Heart right ventricle (tissue), 16 donors: ENCODE measurements at regions of chr10 and their contacts with region 1.

Region 1: GRCh38 chr10:103685880-103686669 is 169.3 kb downstream of the SH3PXD2A start:
- DNase-seq: peak; percentile 69 to 78
- ATAC-seq: peak; percentile 69 to 87 (median 82)
- H3K4me3 ChIP-seq: no peak overlapping the region
- H3K27ac ChIP-seq: no peak overlapping the region
- H3K4me1 ChIP-seq: peaks cover 0 to 20% (median 5%) of the 10 kb centered on the region in 9 donors
- H3K27me3 ChIP-seq: no peaks in the 10 kb centered on the region
- CTCF ChIP-seq: peak; percentile 95 to 99 (median 96)

Region 2: DNA sequence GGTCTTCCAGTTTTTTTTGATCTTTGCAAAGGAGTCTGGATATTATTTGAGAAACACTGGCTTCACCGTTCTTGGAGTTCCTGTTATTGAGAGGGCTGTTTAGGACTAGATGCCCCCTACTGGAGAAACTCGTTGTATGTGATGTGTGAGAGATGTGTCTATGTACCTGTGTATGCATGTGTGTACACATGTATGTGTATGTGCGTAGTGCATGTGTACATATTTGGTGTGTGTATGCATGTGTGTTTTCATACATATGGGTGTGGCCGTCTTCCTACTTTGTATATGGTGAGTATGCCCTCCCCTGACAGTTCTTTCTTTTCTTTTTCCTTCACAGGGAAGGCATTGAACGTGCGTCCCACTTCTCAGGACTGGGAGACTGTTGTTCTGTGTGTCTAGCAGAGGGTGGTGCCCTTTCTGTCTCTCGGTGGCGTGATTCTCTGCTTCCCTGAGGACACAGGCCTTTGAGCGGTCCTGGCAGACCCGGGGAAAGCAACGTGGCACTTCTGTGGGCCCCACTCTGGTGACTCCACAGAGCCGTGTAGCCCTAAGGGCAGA is 204.0 kb before region 1 on chr10:
- intact Hi-C with region 1: no loop called
- DNase-seq: peak in 1 of 2 donors; percentile 61
- ATAC-seq: peak in 6 of 8 donors; percentile 46 to 70 (median 60)
- H3K4me3 ChIP-seq: no peak overlapping the region
- H3K27ac ChIP-seq: no peak overlapping the region
- H3K4me1 ChIP-seq: peaks cover 0 to 17% (median 3%) of the 10 kb centered on the region in 9 donors
- H3K27me3 ChIP-seq: no peaks in the 10 kb centered on the region
- CTCF ChIP-seq: peak; percentile 46 to 79 (median 70)

Region 3: DNA sequence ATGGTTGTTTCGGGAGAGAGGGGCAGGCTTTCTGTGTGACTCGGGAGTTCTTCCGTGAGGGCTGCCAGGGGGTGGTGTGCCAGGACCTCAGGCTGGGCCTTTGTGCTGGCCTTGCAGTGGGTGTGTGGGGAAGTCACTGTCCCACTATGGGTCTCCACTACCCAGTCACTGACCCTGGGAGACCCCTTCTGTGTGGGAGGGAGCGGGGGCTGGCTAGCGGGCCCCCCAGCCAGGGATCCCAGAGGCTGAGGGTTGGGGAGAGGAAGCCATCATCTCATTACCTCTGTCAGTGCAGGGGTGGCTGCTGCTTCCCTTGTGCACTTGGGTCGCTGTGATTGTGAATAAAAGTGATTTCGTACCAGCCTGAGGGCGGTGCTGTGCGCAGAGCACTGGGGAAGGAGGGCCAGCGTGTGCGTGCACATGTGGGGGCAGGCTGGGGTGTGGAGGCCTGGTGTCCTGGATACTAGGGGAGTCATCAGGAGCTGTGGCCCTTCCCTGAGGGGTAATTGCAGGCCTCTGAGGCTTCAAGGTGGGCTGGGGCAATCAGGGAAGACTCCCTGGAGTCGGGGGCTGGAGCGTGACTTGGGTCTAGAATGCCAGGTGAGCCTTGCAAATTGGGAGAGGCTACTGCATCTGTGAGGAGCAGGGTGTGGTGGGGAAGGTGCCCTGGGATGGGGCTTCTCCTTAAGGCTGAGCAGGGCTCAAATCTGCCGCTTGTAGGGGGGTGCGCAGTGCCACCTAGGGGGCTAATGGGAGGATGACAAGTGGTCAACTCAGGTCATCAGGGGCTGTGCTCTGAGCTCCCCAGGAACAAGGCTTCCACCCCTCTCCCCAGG is 93.7 kb before region 1 on chr10:
- intact Hi-C with region 1: loop called in 2 of 10 experiments (anchors 1 to 5 kb)
- DNase-seq: no peak
- ATAC-seq: peak in 7 of 8 donors; percentile 11 to 49 (median 43)
- H3K4me3 ChIP-seq: no peak overlapping the region
- H3K27ac ChIP-seq: no peak overlapping the region
- H3K4me1 ChIP-seq: peaks cover 0 to 14% (median 6%) of the 10 kb centered on the region in 9 donors
- H3K27me3 ChIP-seq: no peaks in the 10 kb centered on the region
- CTCF ChIP-seq: peak; percentile 23 to 70 (median 57)

Region 4: GRCh38 chr10:103598654-103599115 is 87.4 kb before region 1 on chr10:
- intact Hi-C with region 1: loop called in 9 of 10 experiments (anchors 1 to 5 kb)
- DNase-seq: peak in 1 of 2 donors; percentile 59
- ATAC-seq: peak in 6 of 8 donors; percentile 27 to 73 (median 57)
- H3K4me3 ChIP-seq: no peak overlapping the region
- H3K27ac ChIP-seq: peak overlapping the region in 2 of 10 donors; percentile 3 to 40
- H3K4me1 ChIP-seq: peaks cover 0 to 36% (median 11%) of the 10 kb centered on the region in 9 donors
- H3K27me3 ChIP-seq: no peaks in the 10 kb centered on the region
- CTCF ChIP-seq: peak; percentile 35 to 76 (median 66)

Region 5: DNA sequence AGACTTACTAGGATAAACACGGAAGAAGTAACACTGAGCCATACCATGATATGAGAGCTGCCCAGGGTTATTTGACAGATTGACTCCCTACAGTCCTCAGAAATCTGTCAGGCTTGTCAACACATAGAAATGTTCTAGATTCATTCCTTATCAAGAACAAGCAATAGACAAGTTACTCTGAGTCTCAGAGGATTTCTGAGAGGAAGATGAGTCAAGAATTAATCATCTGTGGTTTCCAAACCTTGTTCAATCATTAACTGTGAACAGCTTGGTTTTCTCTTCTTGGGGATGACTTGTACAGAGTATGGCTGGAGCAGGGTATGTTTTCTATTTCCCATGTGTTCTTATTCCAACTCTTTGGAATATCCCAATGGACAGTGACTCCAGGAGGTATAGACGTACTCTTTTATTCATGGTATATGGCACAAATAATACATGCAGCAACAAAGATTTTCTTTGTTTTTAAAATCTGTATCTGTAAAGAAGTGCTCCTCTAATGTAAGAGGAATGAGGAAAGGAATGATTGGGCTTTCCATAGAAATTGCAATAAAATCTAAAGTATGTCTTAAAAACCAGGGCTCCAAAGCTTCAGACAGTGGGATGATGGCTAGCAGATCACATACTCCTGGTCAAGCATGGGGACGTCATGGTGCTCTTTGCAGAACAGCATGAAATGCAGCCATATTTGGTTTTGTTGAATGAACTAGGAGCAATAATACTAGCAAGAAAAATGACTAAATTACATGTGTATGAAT is 424.0 kb after region 1 on chr10:
- intact Hi-C with region 1: no loop called
- DNase-seq: no peak
- ATAC-seq: no peak
- H3K4me3 ChIP-seq: no peak overlapping the region
- H3K27ac ChIP-seq: no peak overlapping the region
- H3K4me1 ChIP-seq: peaks cover 0 to 5% (median 0%) of the 10 kb centered on the region in 9 donors
- H3K27me3 ChIP-seq: peaks cover 0 to 6% (median 0%) of the 10 kb centered on the region in 7 donors
- CTCF ChIP-seq: no peak